ENCODE measurements at regions of chr14 and their contacts with region 1.

Region 1: GRCh38 chr14:22556990-22557623 is 31.9 kb downstream of the DAD1 start:
- DNase-seq: peak; percentile 88
- H3K4me3 Mint-ChIP-seq: peak overlapping the region; percentile 83
- H3K27ac Mint-ChIP-seq: peak overlapping the region; percentile 96
- H3K4me1 Mint-ChIP-seq: peaks cover 93% of the 10 kb centered on the region
- H3K27me3 Mint-ChIP-seq: peaks cover 2% of the 10 kb centered on the region

Region 2: GRCh38 chr14:21987937-21988336 is 569.2 kb before region 1 on chr14:
- intact Hi-C with region 1: loop called (anchors 2 kb)
- DNase-seq: no peak
- H3K4me3 Mint-ChIP-seq: peak overlapping the region; percentile 30
- H3K27ac Mint-ChIP-seq: peak overlapping the region; percentile 86
- H3K4me1 Mint-ChIP-seq: peaks cover 24% of the 10 kb centered on the region
- H3K27me3 Mint-ChIP-seq: peaks cover 15% of the 10 kb centered on the region

Region 3: GRCh38 chr14:22221508-22221907 is 335.6 kb before region 1 on chr14:
- intact Hi-C with region 1: loop called (anchors 2 kb)
- DNase-seq: no peak
- H3K4me3 Mint-ChIP-seq: peak overlapping the region; percentile 59
- H3K27ac Mint-ChIP-seq: peak overlapping the region; percentile 65
- H3K4me1 Mint-ChIP-seq: no peaks in the 10 kb centered on the region
- H3K27me3 Mint-ChIP-seq: no peaks in the 10 kb centered on the region

Region 4: DNA sequence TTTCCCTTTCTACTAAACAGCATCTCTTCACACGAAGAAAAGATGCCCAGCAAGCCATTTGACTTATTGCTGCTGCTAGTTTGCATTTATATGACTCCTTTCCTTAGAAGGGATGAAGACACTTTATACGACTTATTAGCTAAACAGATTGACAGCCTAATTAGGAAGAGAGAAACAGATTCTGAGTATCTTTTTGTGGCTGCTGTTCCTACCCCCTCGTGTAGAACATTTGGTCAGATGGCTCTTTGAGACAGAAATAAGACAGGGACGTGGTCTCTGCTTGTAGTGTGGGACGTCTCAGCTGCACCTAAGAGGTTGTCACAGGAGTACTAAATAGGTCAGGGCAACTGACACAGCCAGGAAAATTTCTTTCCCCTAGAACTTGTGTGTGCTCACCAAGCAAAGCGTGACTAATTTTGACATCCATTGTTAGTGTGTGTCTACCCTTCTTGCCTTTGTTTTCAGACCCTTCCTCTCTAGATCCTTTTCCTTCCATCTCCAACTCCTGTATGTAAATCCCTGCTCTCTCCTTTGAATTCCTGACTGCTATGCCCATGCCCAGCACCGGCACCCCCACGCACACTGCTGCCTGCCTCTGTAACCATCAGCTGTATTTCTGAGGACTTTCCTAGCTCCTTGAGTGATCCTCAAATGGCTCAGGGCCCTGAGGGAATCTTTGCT is 51.3 kb before region 1 on chr14:
- intact Hi-C with region 1: loop called (anchors 1 kb)
- DNase-seq: no peak
- H3K4me3 Mint-ChIP-seq: peak overlapping the region; percentile 95
- H3K27ac Mint-ChIP-seq: peak overlapping the region; percentile 96
- H3K4me1 Mint-ChIP-seq: peaks cover 78% of the 10 kb centered on the region
- H3K27me3 Mint-ChIP-seq: no peaks in the 10 kb centered on the region

Region 5: DNA sequence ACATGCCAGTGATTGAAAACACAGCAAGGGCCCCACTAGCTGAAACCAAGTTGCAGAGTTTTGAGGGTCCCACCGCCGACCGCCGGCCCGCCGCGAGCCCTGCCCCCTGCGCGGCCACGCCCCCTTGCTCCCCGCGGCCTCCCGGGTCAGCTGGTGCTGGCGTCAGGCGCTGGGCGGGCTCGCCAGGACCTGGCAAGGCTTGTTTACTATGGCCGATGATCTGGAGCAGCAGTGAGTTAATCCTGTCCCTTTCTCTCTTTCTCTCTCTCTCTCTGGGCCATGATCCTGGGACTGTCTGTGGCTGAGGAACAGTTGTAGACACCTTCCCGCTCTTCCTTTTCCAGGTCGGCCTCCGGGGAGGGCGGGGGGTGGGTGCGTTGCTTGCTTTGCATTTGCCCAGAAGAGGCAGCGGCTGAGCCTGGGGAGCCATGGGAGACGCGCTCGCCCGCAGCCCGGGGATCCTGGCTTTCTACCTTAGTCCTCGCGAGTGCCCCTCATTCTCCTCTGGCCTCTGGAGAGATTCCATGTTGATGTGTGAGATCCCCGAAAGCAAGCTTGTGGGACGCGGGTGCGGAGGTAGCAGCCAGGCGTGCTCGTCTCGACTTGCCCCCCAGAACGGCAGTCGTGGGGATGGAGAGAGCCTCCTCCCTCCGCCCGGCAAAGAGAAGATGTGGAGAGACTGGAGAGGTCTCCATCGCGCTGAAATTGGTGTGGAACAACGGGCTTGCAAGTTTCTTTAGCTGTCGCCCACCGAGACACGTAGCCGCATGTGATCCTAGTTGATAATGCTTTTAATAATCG is 41.2 kb after region 1 on chr14 and contains the start of gene ABHD4:
- intact Hi-C with region 1: loop called (anchors 1 kb)
- DNase-seq: peak; percentile 72
- H3K4me3 Mint-ChIP-seq: peak within 1 kb of the TSS; percentile 97
- H3K27ac Mint-ChIP-seq: peak within 1 kb of the TSS; percentile 84
- H3K4me1 Mint-ChIP-seq: peaks cover 39% of the 10 kb centered on the region
- H3K27me3 Mint-ChIP-seq: no peaks in the 10 kb centered on the region
- total RNA-seq, gene ABHD4: 13.2 and 13.6 TPM in 2 replicates

Region 6: DNA sequence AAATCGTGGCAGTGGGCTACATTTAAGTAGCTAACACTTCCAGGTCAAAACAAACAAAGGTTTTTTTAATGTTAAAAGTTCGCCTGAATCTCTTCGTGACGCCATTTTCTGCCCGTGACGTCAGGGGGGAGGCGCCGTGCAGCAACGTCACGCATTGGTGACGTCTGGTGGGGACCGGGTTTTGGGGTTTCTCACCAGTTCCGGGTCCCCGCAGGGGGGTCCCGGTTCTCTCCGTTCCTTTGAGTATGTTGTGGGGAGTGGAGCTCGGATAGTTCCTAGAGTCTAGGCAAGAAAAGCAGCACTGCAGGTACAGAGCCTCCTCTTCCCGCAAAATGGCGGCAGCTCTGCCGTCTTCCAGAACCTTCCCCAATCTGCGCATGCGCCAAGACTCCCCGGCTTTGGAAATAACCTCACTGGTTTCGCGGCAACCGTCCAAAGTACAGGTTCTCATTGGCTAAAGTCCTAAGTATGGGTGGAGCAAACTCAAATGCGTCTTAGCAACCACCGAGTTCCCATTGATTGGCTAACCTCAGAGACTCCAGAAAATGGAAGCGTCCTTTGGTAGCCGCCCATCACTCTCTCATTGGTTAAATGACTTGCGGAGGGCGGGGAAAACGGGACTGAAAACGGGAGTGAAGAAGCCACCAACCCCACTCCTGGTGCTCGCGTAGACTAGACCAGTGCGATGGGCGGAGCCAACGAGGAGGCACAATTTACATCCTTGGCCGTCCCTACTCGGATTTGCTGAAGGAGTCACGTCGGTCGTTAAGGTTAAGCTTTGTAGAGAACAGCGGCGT is 361.9 kb after region 1 on chr14 and contains the start of gene RBM23:
- intact Hi-C with region 1: loop called (anchors 1 kb)
- DNase-seq: peak; percentile 99
- H3K4me3 Mint-ChIP-seq: peak within 1 kb of the TSS; percentile 95
- H3K27ac Mint-ChIP-seq: peak within 1 kb of the TSS; percentile 100
- H3K4me1 Mint-ChIP-seq: peaks cover 54% of the 10 kb centered on the region
- H3K27me3 Mint-ChIP-seq: peaks cover 4% of the 10 kb centered on the region
- total RNA-seq, gene RBM23: 86.4 and 90.5 TPM in 2 replicates

Measured in activated T-helper 1 cell treated with anti-CD3 and anti-CD28 coated beads, Interleukin-12 subunit alpha, Interleukin-12 subunit beta, Interleukin-2, Interleukin-4 antibody, amounts not matched to agents 30 ng/mL and 10 ng/mL and 1 ng/mL, durations not matched to agents 14 hours and 24 hours and 36 hours (primary cell).